Pancreas (tissue), 10 donors: ENCODE measurements at regions of chr19 and their contacts with region 1.

Region 1: GRCh38 chr19:47209319-47210179 is 21.4 kb downstream of the BBC3 start:
- DNase-seq: no peak
- ATAC-seq: no peak
- H3K4me3 ChIP-seq: no peak overlapping the region
- H3K27ac ChIP-seq: no peak overlapping the region
- H3K4me1 ChIP-seq: no peaks in the 10 kb centered on the region
- H3K27me3 ChIP-seq: no peaks in the 10 kb centered on the region
- CTCF ChIP-seq: no peak

Region 2: DNA sequence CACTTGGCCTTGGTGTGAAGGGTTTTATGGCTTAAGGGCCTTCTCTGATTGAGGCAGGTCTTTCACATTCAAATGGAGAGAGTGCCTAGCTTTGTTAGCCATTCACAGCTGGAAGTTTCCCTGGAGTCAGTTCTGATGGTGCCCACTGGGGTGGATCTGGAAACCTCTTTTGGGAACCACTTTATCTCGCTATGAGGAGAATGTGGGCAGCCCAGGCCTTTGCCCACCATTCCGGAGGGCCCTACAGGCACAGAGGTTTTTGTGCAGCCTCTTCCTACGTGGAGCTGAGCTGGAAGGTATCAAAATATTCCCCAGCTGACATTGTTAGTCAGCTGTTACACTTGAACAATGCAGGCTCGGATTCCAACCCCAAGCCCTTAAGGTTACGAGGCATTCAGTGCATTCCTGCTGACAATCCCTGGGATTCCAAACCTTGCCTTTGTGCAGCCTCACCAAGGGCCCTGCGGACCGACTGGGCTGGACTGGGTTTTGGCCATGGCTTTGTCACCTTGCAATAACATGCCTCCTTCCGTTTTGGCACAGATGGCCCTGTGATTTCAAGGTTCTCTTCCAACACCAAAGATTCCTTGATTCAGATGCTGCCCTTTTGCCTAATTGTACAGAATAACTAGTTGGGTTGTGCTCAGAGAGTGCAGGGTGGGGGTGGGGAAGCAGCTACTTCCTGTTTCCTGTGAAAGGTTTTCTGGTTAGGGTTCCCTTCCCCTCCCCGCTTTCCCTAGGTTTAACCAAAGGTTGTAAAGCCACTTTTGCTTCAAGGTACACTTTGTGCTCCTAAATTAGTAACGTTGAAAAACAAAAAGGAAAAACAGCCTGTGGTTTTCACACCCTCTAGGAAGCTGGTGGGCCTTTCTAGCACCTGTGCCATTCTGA is 51.9 kb before region 1 on chr19:
- intact Hi-C with region 1: loop called in 1 of 3 experiments (anchors 10 kb)
- DNase-seq: no peak
- ATAC-seq: peak in 3 of 4 donors; percentile 42 to 53 (median 52)
- H3K4me3 ChIP-seq: no peak overlapping the region
- H3K27ac ChIP-seq: peak overlapping the region in 2 of 4 donors; percentile 15 to 16
- H3K4me1 ChIP-seq: peaks cover 4 to 5% (median 4%) of the 10 kb centered on the region in 3 donors
- H3K27me3 ChIP-seq: no peaks in the 10 kb centered on the region
- CTCF ChIP-seq: no peak

Region 3: GRCh38 chr19:47324502-47324901 is 115.0 kb after region 1 on chr19:
- intact Hi-C with region 1: no loop called
- DNase-seq: peak in 1 of 6 donors; percentile 49
- ATAC-seq: peak in 3 of 4 donors; percentile 26 to 79 (median 74)
- H3K4me3 ChIP-seq: no peak overlapping the region
- H3K27ac ChIP-seq: peak overlapping the region in 1 of 4 donors; percentile 57
- H3K4me1 ChIP-seq: no peaks in the 10 kb centered on the region
- H3K27me3 ChIP-seq: no peaks in the 10 kb centered on the region
- CTCF ChIP-seq: no peak

Region 4: GRCh38 chr19:47613165-47614020 is 403.8 kb after region 1 on chr19:
- intact Hi-C with region 1: no loop called
- DNase-seq: no peak
- ATAC-seq: no peak
- H3K4me3 ChIP-seq: no peak overlapping the region
- H3K27ac ChIP-seq: no peak overlapping the region
- H3K4me1 ChIP-seq: peaks cover 4 to 13% (median 7%) of the 10 kb centered on the region in 3 donors
- H3K27me3 ChIP-seq: no peaks in the 10 kb centered on the region
- CTCF ChIP-seq: no peak